Cardiac septum (tissue), 1 donor: ENCODE measurements at regions of chr5 and their contacts with region 1.

Region 1: GRCh38 chr5:57488215-57488955 is 5.8 kb upstream of the ACTBL2 start:
- DNase-seq: no peak

Region 2: DNA sequence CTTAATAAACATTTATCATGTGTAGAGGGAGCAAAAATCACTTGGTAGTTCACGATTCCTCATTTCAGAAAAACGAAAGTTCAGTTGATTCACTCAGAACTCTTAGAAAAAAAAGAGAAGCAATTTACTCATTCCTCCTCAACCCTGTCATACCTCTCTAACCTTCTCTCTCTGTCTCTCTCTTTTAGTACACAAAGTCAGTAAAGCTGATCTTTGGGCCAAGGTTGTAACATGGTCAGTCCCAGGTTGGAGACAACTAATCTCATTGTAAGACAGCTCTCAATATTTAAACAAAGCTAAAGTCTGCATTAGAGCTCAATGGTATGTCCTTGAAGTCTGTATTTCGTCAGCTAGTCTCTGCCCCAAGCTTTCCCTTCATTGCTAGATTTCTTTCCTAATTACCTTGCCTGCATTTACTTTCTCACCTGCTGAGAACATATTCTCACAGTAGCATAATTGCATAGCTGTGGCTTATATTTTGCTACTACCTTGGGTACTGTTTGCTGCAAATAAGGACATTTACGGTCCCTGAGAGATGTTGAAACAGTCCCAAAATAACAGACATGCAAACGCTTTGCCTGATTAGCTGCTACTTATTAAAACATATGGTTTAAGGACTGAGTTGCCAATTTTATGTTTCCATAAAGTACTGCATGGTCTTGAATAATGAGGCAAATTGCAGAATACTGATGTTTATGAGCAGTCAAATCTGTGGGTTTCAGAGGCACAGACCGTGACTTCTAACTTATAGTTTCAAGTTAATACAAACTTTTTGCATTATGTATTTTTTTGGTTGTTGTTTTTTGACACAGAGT is 176.3 kb before region 1 on chr5:
- intact Hi-C with region 1: loop called (anchors 5 kb)
- DNase-seq: no peak